Aorta (tissue), 5 donors: ENCODE measurements at regions of chr1 and their contacts with region 1.

Region 1: DNA sequence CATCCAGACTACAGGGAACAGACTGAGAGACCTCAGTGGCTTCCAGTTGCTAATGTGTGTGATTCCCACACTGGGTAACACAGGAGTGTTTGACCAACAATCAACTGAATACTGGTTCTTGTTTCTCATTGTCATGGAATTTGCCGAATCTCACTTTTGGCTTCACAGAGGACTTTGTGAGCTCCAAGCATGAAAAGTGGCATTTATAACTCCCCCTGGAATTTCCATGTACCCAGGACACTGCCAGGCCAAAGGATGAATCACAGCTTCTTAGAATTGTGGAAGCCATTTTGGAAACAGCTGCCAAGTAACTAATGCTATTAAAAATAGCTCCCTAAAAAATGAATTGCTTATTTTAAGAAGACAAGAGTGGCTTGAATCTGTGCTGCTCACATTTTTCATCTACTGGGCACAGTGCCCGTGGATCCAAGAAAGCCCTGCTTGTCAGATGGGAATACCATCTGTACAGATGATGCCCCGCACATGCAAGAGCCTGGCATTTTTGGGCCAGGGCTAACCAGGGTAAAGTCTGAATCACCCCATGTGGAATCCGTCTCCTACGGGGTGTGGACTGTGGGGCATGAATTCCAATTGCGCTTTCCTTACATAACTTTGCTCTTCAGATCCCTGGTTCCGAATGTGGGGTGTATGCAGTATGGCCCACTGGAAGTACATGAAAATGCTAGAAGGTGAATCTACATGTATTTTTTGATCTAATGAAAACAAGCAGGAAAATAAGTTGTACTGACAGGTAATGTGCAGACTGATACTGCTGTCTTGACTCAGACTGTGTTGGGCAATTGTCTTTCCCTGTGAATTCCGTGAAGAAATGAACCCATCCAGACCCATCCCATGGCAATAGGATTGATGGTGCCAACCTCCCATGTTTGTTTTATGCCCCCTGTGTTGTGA is 487.3 kb downstream of the SIPA1L2 start:
- DNase-seq: peak; percentile 84
- ATAC-seq: peak; percentile 86
- H3K4me3 ChIP-seq: no peak overlapping the region
- H3K27ac ChIP-seq: peak overlapping the region; percentile 57 to 90
- H3K4me1 ChIP-seq: peaks cover 3 to 8% of the 10 kb centered on the region in 2 donors
- H3K27me3 ChIP-seq: no peaks in the 10 kb centered on the region

Region 2: DNA sequence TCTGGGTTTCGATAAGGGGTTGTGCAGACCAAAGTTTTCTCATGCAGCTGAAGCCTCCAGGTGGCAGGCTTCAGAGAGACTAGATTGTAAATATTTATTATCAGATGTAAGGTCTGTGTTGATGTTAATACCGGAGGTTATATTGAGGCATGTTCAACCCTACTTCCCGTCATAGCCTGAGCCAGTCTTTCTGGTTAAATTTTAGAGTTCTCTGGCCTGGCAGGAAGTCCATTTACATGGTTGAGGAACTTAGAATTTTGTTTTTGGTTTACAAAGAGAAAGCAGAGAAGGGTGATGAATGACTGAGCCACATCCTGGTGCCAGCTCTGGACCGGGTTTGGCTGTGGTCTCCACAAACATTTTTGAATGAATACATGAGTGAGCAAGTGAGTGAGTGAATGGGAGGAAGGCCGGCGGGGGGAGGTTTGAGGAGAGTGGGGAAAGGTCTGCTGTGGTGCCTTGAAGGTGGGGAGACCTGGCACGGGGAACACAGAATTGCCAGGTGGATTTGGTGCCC is 297.6 kb before region 1 on chr1:
- intact Hi-C with region 1: loop called in 1 of 2 experiments (anchors 10 kb)
- DNase-seq: peak; percentile 69 to 76
- ATAC-seq: no peak
- H3K4me3 ChIP-seq: no peak overlapping the region
- H3K27ac ChIP-seq: peak overlapping the region; percentile 9 to 19
- H3K4me1 ChIP-seq: no peaks in the 10 kb centered on the region
- H3K27me3 ChIP-seq: no peaks in the 10 kb centered on the region